MCF 10A (cell line): ENCODE measurements at regions of chr2 and their contacts with region 1.

Region 1: DNA sequence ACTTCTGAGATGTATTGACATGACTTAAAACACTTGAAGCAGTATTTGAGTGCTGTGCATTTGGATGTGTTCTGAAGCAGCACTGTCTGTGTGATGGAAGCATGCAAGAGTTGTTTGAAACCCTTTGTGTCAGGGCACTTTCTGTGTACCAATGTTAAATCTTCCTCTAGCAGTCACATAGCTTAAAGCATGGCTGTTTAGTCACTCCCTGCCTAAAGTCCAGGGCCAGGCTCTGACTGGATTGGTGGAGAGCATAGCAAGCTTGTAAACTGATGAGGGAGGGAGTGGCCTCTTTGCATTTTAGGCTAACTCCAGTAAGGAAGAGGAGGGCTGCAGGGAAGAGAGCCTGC is 73.5 kb downstream of the MYO1B start:
- DNase-seq: peak; percentile 84
- H3K4me3 Mint-ChIP-seq: no peak overlapping the region
- H3K27ac Mint-ChIP-seq: peak overlapping the region; percentile 79
- H3K4me1 Mint-ChIP-seq: peaks cover 56% of the 10 kb centered on the region
- H3K27me3 Mint-ChIP-seq: no peaks in the 10 kb centered on the region
- CTCF ChIP-seq: no peak

Region 2: GRCh38 chr2:190984595-190984994 is 334.1 kb before region 1 on chr2:
- CTCF ChIA-PET with region 1: no interaction called
- POLR2A ChIA-PET with region 1: no interaction called
- intact Hi-C with region 1: no loop called
- DNase-seq: peak; percentile 83
- H3K4me3 Mint-ChIP-seq: no peak overlapping the region
- H3K27ac Mint-ChIP-seq: no peak overlapping the region
- H3K4me1 Mint-ChIP-seq: peaks cover 7% of the 10 kb centered on the region
- H3K27me3 Mint-ChIP-seq: no peaks in the 10 kb centered on the region
- CTCF ChIP-seq: no peak

Region 3: GRCh38 chr2:191171708-191172355 is 146.9 kb before region 1 on chr2:
- CTCF ChIA-PET with region 1: interaction called, 3 read pairs
- POLR2A ChIA-PET with region 1: interaction called, 10 read pairs
- intact Hi-C with region 1: no loop called
- DNase-seq: peak; percentile 98
- H3K4me3 Mint-ChIP-seq: peak overlapping the region; percentile 33
- H3K27ac Mint-ChIP-seq: peak overlapping the region; percentile 79
- H3K4me1 Mint-ChIP-seq: peaks cover 61% of the 10 kb centered on the region
- H3K27me3 Mint-ChIP-seq: no peaks in the 10 kb centered on the region
- CTCF ChIP-seq: no peak

Region 4: DNA sequence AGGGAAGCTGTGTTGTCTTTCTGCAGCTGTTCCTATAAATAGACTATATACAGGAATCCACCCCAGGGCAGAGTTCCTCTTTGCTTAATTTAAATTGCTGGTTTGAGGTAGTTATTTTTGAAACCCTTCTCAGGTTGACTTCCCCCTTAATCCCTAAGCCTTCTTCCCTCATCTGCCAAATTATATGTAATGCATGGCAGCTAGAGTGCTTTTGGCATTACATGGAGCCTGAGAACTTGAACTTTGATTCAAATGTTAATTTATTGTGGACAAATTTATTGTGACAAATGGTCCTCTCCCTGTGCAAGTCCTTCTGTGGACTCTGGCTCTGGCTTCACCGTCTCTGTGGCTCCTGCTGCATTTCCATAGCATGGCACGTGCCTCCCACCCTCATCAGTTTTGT is 44.3 kb before region 1 on chr2:
- CTCF ChIA-PET with region 1: no interaction called
- POLR2A ChIA-PET with region 1: no interaction called
- intact Hi-C with region 1: no loop called
- DNase-seq: no peak
- H3K4me3 Mint-ChIP-seq: no peak overlapping the region
- H3K27ac Mint-ChIP-seq: peak overlapping the region; percentile 19
- H3K4me1 Mint-ChIP-seq: peaks cover 12% of the 10 kb centered on the region
- H3K27me3 Mint-ChIP-seq: no peaks in the 10 kb centered on the region
- CTCF ChIP-seq: no peak

Region 5: GRCh38 chr2:191533693-191534180 is 215.0 kb after region 1 on chr2:
- CTCF ChIA-PET with region 1: no interaction called
- POLR2A ChIA-PET with region 1: no interaction called
- intact Hi-C with region 1: no loop called
- DNase-seq: no peak
- H3K4me3 Mint-ChIP-seq: no peak overlapping the region
- H3K27ac Mint-ChIP-seq: no peak overlapping the region
- H3K4me1 Mint-ChIP-seq: no peaks in the 10 kb centered on the region
- H3K27me3 Mint-ChIP-seq: no peaks in the 10 kb centered on the region
- CTCF ChIP-seq: no peak